HepG2 (cell line): ENCODE measurements at regions of chr6 and their contacts with region 1.

Region 1: DNA sequence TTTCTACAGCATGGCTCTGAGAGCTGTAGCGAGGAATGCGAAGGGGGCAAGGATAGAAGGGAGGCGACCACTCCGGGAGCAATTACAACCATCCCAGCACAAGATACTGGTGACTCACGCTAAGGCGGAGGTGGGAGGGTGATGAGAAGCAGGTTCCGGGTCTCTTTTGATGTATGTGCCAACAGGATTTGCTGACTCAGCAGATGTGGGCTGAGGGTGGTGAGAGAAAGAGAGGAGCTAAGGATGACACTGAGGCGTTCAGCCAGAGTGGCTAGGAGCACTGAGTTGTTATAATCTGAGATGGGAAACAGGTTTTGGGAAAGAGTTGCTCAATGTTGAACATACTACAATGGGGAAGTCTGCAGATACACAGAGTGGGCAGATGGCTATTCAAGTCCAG is 9.3 kb upstream of the TXNDC5 start:
- DNase-seq: peak; percentile 36
- ATAC-seq: no peak
- H3K4me3 ChIP-seq: no peak overlapping the region
- H3K27ac ChIP-seq: no peak overlapping the region
- H3K4me1 ChIP-seq: peaks cover 30% of the 10 kb centered on the region
- H3K27me3 ChIP-seq: no peaks in the 10 kb centered on the region; a peak in 1 of 5 replicates
- CTCF ChIP-seq: no peak
- EP300 ChIP-seq: no peak
- POLR2A ChIP-seq: no peak
- RAD21 ChIP-seq: no peak

Region 2: GRCh38 chr6:7956257-7956656 is 36.4 kb after region 1 on chr6:
- CTCF ChIA-PET with region 1: no interaction called
- POLR2A ChIA-PET with region 1: no interaction called
- in situ Hi-C with region 1: no loop called
- intact Hi-C with region 1: loop called (anchors 1 kb)
- DNase-seq: no peak
- ATAC-seq: no peak
- H3K4me3 ChIP-seq: no peak overlapping the region
- H3K27ac ChIP-seq: no peak overlapping the region
- H3K4me1 ChIP-seq: no peaks in the 10 kb centered on the region
- H3K27me3 ChIP-seq: peaks cover 0 to 9% of the 10 kb centered on the region in 2 experiments; a peak in 1 of 5 replicates
- CTCF ChIP-seq: no peak
- EP300 ChIP-seq: no peak
- POLR2A ChIP-seq: no peak
- RAD21 ChIP-seq: no peak

Region 3: DNA sequence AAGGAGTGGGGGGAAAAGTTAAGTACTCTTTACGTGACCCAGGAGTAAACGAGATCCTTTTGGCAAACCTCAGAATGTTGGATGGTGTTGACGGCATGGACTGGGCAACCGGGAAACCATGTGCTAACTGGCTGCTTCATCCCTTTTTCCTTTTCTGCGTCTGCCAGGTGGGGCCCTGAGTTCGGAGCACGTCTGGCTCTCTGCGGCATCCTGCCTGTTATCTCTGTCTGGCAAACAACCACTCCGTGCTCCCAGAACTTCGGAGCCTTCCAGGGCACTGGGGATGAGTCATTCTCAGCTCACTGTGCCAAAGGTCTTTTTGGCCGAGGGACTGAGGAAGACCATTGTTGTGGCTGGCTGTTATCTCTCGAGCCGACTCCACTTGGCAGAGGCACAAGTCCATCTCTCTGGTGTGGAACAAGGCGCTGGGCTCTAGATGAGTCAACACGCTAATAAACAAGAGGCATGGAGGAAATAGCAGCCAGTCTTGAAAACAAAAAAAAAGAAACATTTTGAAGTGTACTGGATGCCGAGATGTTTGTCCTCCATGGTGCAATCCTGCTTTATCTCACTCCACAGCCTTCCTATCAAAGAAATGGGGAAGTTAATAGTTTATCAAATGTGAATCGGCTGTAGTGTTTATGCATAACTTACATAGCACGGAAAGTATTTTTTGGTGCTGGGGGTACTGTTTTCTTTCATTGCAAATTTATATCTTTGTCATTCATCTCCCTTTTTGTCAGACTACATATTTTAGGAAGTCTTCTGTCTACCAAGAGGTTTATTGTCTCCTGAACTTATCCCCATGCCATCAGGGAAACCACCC is 55.3 kb after region 1 on chr6:
- CTCF ChIA-PET with region 1: no interaction called
- POLR2A ChIA-PET with region 1: interaction called, 7 read pairs
- in situ Hi-C with region 1: no loop called
- intact Hi-C with region 1: loop called (anchors 2 kb)
- DNase-seq: peak; percentile 100
- ATAC-seq: peak; percentile 97
- H3K4me3 ChIP-seq: peak overlapping the region; percentile 18 to 49 (median 44); a peak in 5 of 6 replicates
- H3K27ac ChIP-seq: peak overlapping the region; percentile 73
- H3K4me1 ChIP-seq: peaks cover 36% of the 10 kb centered on the region
- H3K27me3 ChIP-seq: no peaks in the 10 kb centered on the region
- CTCF ChIP-seq: peak; percentile 31; the same call in 1 of the 2 replicates
- EP300 ChIP-seq: peak; percentile 22 to 94; a peak in 3 of 4 replicates
- POLR2A ChIP-seq: peak in 1 of 2 experiments; percentile 45; a peak in 2 of 4 replicates
- RAD21 ChIP-seq: peak; percentile 35; the same call in 1 of the 2 replicates